ENCODE measurements at regions of chr3 and their contacts with region 1.

Region 1: GRCh38 chr3:48400824-48401433 is 28.9 kb downstream of the FBXW12 start:
- DNase-seq: peak; percentile 74
- H3K4me3 Mint-ChIP-seq: no peak overlapping the region
- H3K27ac Mint-ChIP-seq: no peak overlapping the region
- H3K4me1 Mint-ChIP-seq: no peaks in the 10 kb centered on the region
- H3K27me3 Mint-ChIP-seq: peaks cover 1% of the 10 kb centered on the region

Region 2: GRCh38 chr3:48232734-48233133 is 168.2 kb before region 1 on chr3:
- CTCF ChIA-PET with region 1: interaction called, 11 read pairs
- POLR2A ChIA-PET with region 1: no interaction called
- intact Hi-C with region 1: no loop called
- DNase-seq: peak; percentile 77
- H3K4me3 Mint-ChIP-seq: no peak overlapping the region
- H3K27ac Mint-ChIP-seq: no peak overlapping the region
- H3K4me1 Mint-ChIP-seq: peaks cover 2% of the 10 kb centered on the region
- H3K27me3 Mint-ChIP-seq: peaks cover 3% of the 10 kb centered on the region

Region 3: DNA sequence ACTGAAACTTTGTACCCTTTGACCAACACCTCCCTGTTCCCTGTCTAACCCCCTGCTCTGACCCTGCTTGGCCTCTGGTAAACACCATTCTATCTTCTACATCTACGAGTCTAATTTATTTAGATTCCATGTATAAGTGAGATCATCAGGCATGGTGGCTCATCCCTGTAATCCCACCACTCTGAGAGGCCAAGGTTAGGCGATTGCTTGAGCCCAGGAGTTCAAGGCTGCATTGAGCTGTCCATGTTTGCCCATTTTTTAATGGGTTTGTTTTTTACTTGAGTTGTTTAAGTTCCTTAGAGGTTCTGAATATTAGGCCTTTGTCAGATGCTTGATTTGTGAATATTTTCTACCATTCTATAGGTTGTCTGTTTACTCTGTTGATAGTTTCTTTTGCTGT is 12.0 kb before region 1 on chr3:
- CTCF ChIA-PET with region 1: interaction called, 11 read pairs
- POLR2A ChIA-PET with region 1: no interaction called
- intact Hi-C with region 1: no loop called
- DNase-seq: no peak
- H3K4me3 Mint-ChIP-seq: no peak overlapping the region
- H3K27ac Mint-ChIP-seq: no peak overlapping the region
- H3K4me1 Mint-ChIP-seq: no peaks in the 10 kb centered on the region
- H3K27me3 Mint-ChIP-seq: peaks cover 13% of the 10 kb centered on the region

Region 4: GRCh38 chr3:48422270-48422669 is 21.3 kb after region 1 on chr3:
- CTCF ChIA-PET with region 1: interaction called, 11 read pairs
- POLR2A ChIA-PET with region 1: no interaction called
- intact Hi-C with region 1: no loop called
- DNase-seq: no peak
- H3K4me3 Mint-ChIP-seq: no peak overlapping the region
- H3K27ac Mint-ChIP-seq: no peak overlapping the region
- H3K4me1 Mint-ChIP-seq: no peaks in the 10 kb centered on the region
- H3K27me3 Mint-ChIP-seq: no peaks in the 10 kb centered on the region

Region 5: DNA sequence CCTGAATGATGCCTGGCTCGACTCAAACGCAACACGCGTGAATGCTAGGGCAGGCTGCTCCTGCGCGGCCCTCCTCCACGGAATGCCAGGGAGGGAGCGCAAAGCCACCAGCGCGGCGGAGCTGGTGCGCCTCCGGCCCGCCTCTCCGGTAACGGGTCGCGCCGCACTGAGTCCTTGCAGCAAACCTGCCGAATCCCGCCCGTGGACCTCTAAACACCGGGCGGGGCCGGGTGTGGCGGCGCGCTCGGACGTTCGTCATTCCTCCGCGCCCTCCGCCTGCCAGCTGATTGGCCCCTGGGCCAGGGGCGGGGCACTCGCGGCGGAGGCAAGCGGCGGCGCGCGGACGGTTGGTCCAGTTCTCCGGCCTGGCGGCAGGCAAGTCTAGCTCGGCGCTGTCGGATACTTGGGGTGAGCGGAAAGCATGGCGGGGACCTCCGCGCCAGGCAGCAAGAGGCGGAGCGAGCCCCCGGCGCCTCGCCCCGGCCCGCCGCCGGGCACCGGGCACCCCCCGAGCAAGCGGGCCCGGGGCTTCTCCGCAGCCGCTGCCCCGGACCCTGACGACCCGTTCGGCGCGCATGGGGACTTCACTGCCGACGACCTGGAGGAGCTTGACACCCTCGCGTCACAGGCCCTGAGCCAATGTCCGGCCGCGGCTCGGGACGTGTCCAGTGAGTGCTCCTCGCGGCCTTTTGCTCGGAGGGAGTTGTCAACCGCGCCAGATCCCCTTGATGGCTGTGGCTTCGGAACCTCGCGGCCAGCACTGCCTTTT is 45.7 kb after region 1 on chr3 and contains the start of gene ATRIP:
- CTCF ChIA-PET with region 1: interaction called, 14 read pairs
- POLR2A ChIA-PET with region 1: no interaction called
- intact Hi-C with region 1: no loop called
- DNase-seq: peak; percentile 91
- H3K4me3 Mint-ChIP-seq: peak within 1 kb of the TSS; percentile 90
- H3K27ac Mint-ChIP-seq: peak within 1 kb of the TSS; percentile 64
- H3K4me1 Mint-ChIP-seq: peaks cover 43% of the 10 kb centered on the region
- H3K27me3 Mint-ChIP-seq: no peaks in the 10 kb centered on the region
- total RNA-seq, gene ATRIP: 13.8 to 14.5 TPM

Region 6: DNA sequence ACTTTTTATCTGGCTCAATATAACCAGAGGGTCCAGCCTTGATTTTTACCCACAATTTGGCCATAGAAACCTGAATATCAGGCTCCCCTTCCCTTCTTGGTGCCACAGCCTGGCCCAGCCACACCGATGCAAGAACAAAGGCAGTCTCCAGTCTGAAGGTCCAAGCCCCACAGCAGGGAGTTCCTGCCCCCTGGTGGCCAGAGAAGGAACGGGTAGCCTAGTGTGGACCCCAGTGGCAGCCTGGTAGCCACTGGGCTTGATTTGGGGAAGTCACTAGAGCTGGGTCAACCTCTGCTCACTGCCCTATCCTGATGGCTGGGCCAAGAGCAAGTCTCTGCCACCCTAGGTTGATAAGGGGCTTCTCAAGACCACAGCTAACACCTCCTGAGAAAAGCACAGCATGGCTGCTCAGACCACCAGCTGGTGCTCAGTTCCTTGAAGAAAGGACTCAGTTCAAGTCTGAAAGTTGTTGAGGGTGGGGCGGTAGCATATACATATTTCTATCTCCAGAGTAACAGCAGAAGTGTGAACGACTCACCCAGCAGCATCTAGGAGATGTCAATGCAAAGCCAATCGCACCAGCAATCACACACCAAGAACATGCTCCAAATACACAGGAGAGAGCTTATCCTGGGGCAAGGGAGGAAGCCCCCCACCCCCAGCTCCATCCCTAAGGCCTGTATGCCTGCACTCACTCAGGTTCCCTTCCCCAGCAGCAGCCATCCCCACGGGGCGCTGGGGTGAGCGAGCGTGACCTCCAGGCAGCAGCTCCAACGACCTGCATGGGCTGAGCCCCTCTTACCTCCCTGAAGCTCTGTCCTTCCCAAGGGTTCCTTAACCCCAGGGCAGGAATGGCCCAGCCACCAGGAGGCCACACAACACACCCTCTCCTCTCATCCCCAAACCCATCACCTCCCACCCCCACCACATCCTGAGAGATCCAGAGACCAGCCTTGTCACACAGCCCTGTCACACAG is 148.1 kb after region 1 on chr3:
- CTCF ChIA-PET with region 1: interaction called, 153 read pairs
- POLR2A ChIA-PET with region 1: interaction called, 3 read pairs
- intact Hi-C with region 1: loop called (anchors 1 kb)
- DNase-seq: peak; percentile 90
- H3K4me3 Mint-ChIP-seq: no peak overlapping the region
- H3K27ac Mint-ChIP-seq: no peak overlapping the region
- H3K4me1 Mint-ChIP-seq: peaks cover 7% of the 10 kb centered on the region
- H3K27me3 Mint-ChIP-seq: no peaks in the 10 kb centered on the region

Region 7: GRCh38 chr3:48635222-48636021 is 234.5 kb after region 1 on chr3 and contains the start of gene SLC26A6:
- CTCF ChIA-PET with region 1: interaction called, 12 read pairs
- POLR2A ChIA-PET with region 1: no interaction called
- intact Hi-C with region 1: loop called (anchors 1 kb)
- DNase-seq: peak; percentile 97
- H3K4me3 Mint-ChIP-seq: peak within 1 kb of the TSS; percentile 89
- H3K27ac Mint-ChIP-seq: no peak within 1 kb of the TSS
- H3K4me1 Mint-ChIP-seq: peaks cover 18% of the 10 kb centered on the region
- H3K27me3 Mint-ChIP-seq: no peaks in the 10 kb centered on the region
- total RNA-seq, gene SLC26A6: 47.7 to 52.4 TPM